H1 (cell line): ENCODE measurements at regions of chr17 and their contacts with region 1.

Region 1: DNA sequence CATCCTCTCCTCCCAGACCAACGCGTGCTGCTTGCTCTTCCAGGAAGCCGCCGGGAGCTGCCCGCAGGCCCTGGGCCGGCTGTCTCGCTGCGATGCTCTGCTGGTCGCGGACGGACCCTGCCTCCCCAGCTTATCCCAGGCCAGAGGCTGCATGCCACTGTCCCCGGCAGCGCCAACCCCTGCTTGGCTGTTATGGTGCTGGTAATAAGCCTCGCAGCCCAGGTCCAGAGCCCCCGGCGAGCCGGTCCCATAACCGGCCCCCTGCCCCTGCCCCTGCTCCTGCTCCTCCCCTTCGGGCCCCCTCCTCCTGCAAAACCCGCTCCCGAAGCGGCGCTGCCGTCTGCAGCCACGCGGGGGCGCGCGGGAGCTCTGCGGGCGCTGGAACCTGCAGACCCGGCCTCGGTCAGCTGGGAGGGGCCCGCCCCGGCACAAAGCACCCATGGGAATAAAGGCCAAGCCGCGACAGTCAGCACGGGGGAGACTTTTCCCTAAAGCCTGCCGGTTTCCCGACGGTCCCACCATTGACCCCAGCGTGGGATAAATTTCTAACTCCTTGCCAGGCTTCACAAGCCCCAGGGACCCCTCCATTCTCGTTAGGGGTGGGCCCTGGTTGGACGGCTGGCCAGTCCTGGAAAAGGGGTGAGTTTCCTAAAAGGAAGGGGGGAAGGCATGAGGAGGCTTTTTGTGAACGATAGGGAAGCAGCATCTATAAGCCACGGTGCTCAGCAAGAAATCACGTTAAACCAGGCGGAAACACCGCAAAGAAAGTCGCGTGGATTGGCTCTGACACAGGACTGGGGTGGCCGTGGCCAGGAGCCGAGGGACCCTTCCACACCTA is 11.2 kb downstream of the ENPP7 start:
- DNase-seq: peak; percentile 49 to 99
- H3K4me3 ChIP-seq: peak overlapping the region; percentile 35 to 72 (median 58)
- H3K27ac ChIP-seq: no peak overlapping the region
- H3K4me1 ChIP-seq: peaks cover 4 to 15% (median 8%) of the 10 kb centered on the region in 4 experiments; a peak in 6 of 7 replicates
- H3K27me3 ChIP-seq: peaks cover 0 to 31% (median 26%) of the 10 kb centered on the region in 4 experiments; a peak in 6 of 7 replicates
- CTCF ChIP-seq: peak; percentile 84 to 94 (median 92)
- EP300 ChIP-seq: no peak
- POLR2A ChIP-seq: no peak
- RAD21 ChIP-seq: peak; percentile 57 to 75

Region 2: DNA sequence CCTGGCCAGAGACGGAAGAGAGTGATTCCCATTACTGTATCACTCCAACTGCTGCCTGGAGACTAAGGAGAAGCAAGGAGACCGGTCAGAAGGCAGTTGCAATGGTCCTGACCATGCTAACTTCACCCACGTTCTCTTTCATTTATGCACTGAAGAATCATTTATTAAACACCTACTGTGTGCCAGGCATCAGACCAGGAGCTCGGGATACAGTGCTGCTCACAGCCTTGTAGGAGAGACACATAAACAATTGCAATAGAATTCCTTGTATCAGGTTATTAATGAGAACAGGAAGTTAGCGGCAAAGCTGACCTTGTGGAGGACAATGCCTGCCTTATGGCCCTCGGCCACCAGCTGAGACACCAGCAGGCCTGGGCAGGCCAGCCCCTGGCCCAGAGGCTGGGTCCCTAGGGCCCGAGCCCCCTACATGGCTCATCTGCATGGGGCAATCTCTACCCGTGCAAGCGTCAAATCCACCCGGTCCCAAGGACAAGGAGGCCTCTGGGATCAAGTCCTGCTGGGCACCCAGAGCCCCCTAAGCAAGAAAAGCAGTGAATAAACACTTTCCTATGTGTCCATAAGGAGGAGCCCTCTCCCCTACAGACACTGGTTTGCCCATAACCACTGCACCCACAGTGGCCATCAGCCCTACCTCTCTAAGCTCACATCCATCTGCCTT is 19.8 kb before region 1 on chr17:
- CTCF ChIA-PET with region 1: interaction called, 22 read pairs
- POLR2A ChIA-PET with region 1: interaction called, 4 read pairs
- DNase-seq: no peak
- H3K4me3 ChIP-seq: no peak overlapping the region
- H3K27ac ChIP-seq: no peak overlapping the region
- H3K4me1 ChIP-seq: peaks cover 0 to 3% (median under 1%) of the 10 kb centered on the region in 4 experiments; a peak in 1 of 7 replicates
- H3K27me3 ChIP-seq: no peaks in the 10 kb centered on the region; a peak in 1 of 7 replicates
- CTCF ChIP-seq: peak; percentile 66 to 77 (median 71)
- EP300 ChIP-seq: no peak
- POLR2A ChIP-seq: no peak
- RAD21 ChIP-seq: peak; percentile 72 to 81

Region 3: DNA sequence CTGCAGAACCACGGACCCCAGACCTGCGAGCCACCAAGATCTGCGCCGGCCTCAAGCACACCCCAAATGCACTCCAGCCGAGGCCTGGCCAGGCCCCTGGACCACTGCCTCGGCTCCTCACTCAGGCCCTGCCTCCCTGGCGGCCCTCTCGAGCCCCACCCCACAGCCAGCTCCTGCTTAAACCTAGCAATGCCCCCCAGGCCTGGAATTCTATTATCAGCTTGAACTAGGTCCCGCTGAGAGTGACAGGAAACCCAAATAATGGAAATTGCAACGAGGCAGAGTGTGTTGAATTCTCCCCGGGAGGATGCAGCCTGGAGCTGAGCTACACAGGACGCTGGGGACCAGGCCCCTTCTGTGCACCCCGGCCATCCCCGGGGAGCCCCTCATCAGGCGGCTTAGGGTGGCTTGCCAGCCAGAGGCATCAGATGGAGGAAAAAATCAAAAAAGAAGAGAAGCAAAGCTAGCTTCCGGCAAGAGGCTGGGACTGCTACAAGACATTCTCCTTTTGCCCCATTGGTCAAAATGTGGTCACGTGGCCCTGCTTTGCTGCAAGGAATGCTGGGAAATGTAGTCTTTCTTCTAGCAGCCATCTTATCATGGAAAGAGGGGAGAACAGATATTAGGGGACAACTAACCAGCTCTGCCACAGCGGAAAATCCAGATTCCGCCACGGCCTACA is 13.6 kb before region 1 on chr17:
- CTCF ChIA-PET with region 1: interaction called, 22 read pairs
- POLR2A ChIA-PET with region 1: interaction called, 4 read pairs
- DNase-seq: peak; percentile 49 to 91
- H3K4me3 ChIP-seq: 0 out of 8 replicates have a peak overlapping the region, but pooled peaks of 1 of the 4 experiments have one; percentile 12
- H3K27ac ChIP-seq: no peak overlapping the region
- H3K4me1 ChIP-seq: peaks cover 0 to 6% (median 0%) of the 10 kb centered on the region in 4 experiments; a peak in 2 of 7 replicates
- H3K27me3 ChIP-seq: no peaks in the 10 kb centered on the region
- CTCF ChIP-seq: no peak
- EP300 ChIP-seq: no peak
- POLR2A ChIP-seq: no peak
- RAD21 ChIP-seq: no peak

Region 4: DNA sequence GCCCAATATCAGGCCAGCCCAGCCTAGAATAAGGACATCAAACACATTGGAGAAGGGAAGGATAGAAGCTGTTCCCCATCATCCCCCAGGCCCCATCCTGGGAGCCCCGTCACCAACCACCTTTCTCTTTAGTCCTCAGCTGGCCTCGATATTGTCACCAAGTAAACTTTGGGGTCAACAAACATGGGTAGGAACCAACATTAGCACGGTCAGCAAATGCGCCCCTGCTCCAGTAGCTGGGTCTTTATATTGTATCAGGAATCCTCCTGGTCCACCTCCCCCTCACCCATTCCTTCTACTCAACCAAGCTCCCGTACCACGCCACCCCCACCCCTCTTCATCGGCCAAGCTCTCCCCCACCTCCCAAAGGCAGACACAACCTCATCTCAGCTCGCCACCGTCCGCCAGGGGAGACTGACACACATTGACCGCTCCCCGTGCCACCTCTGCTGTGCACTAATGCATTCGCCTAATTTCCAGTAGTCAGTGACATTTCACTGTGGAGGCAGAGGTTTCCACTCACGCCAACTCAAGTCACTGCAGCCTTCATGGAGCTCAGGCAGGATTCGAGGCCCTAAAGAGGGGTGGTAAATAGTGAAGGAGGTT is 15.3 kb after region 1 on chr17:
- CTCF ChIA-PET with region 1: interaction called, 29 read pairs
- POLR2A ChIA-PET with region 1: interaction called, 7 read pairs
- DNase-seq: no peak
- H3K4me3 ChIP-seq: no peak overlapping the region
- H3K27ac ChIP-seq: no peak overlapping the region
- H3K4me1 ChIP-seq: no peaks in the 10 kb centered on the region; a peak in 1 of 7 replicates
- H3K27me3 ChIP-seq: no peaks in the 10 kb centered on the region
- CTCF ChIP-seq: no peak
- EP300 ChIP-seq: no peak
- POLR2A ChIP-seq: no peak
- RAD21 ChIP-seq: no peak

Region 5: DNA sequence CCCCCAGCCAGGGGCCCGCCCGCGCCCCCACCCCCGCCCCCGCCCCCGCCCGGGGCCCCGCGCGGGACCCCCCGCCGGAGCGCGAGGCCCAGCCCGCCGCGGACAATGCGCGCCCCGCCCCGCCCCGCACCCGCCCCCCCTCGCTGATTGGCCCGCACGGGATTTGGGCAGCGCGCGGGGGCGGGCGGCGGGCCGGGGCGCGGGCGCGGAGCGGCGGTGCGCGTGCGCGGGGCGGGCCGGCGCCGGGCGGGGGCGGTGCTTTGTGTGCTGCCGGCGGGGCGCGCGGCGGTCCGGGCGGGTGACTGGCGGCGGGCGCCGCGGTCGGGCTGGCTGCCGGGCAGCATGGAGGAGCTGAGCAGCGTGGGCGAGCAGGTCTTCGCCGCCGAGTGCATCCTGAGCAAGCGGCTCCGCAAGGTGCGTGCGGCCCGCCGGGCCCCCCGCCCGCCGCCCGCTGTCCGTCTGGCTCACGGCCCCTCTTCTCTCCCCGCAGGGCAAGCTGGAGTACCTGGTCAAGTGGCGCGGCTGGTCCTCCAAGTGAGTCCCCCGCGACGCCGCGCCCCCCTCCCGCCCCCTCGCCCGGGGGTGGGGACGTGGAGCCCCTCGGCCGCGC is 36.0 kb after region 1 on chr17 and contains the start of gene CBX2:
- CTCF ChIA-PET with region 1: interaction called, 90 read pairs
- POLR2A ChIA-PET with region 1: interaction called, 77 read pairs
- DNase-seq: peak in 1 of 2 experiments; percentile 85
- H3K4me3 ChIP-seq: peak within 1 kb of the TSS; percentile 57 to 97 (median 83)
- H3K27ac ChIP-seq: peak within 1 kb of the TSS; percentile 85
- H3K4me1 ChIP-seq: peaks cover 4 to 19% (median 15%) of the 10 kb centered on the region in 4 experiments
- H3K27me3 ChIP-seq: no peaks in the 10 kb centered on the region; a peak in 1 of 7 replicates
- CTCF ChIP-seq: no peak
- EP300 ChIP-seq: no peak
- POLR2A ChIP-seq: peak; percentile 63 to 85
- RAD21 ChIP-seq: no peak
- total RNA-seq, gene CBX2: 83.9 and 85.9 TPM in 2 replicates